ENCODE measurements at regions of chr2 and their contacts with region 1.

Region 1: GRCh38 chr2:39059366-39059952 is 61.4 kb downstream of the SOS1 start:
- DNase-seq: peak in 3 of 14 experiments; percentile 74 to 76 (median 74)
- ATAC-seq: peak; percentile 39
- H3K4me3 ChIP-seq: no peak overlapping the region
- H3K4me3 Mint-ChIP-seq: no peak overlapping the region
- H3K27ac ChIP-seq: no peak overlapping the region
- H3K27ac Mint-ChIP-seq: no peak overlapping the region
- H3K4me1 ChIP-seq: no peaks in the 10 kb centered on the region
- H3K4me1 Mint-ChIP-seq: no peaks in the 10 kb centered on the region
- H3K27me3 ChIP-seq: no peaks in the 10 kb centered on the region
- H3K27me3 Mint-ChIP-seq: no peaks in the 10 kb centered on the region
- CTCF ChIP-seq: peak; percentile 86

Region 2: DNA sequence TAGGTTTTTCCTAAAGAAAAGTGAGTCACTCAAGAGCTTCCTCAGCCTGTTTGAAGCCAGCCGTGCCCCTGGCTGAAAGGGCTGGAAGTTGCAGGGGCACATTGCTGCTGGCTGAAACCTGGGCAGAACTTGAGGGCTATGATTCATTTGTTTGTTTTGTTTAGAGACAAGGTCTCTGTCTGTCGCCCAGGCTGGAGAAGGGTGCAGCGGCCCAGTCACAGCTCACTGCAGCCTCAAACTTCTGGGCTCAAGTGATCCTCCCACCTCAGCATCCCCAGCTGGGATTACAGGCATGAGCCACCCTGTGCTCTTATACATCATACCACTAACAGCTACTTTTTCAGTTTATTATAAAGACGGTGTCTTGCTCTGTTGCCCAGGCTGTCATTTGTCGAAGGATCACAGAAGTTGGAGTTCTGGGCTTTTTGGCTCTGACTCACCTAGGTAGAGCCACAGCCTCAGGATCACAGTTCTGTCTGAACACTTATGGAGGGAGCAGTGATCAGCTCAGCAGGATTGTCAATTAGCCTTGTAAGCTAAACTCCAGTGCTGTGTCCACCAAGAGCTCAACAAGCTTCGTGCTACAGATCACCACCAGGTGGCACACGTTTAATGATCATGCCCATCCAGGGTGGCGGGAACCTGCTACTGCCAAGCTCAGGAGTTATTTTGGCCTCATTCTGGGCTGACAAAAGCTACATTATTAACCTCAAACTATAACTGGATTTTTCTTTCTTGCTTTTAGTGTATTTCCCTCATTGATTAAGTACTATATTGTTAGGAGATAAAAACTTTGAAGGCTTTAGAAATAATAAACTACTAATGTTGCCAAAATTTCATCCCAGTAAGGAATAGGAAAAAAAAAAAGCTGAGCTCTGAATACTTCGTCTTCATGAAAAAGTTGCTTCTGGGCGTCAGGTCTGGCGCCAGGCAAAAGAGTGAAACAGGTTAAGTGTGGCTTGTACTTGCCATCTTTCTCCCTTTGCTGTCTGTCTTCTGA is 111.9 kb before region 1 on chr2:
- CTCF ChIA-PET with region 1: no interaction called
- POLR2A ChIA-PET with region 1: no interaction called
- intact Hi-C with region 1: loop called (anchors 2 to 5 kb)
- DNase-seq: peak; percentile 27 to 78 (median 45)
- ATAC-seq: peak; percentile 61
- H3K4me3 ChIP-seq: no peak overlapping the region
- H3K4me3 Mint-ChIP-seq: no peak overlapping the region
- H3K27ac ChIP-seq: no peak overlapping the region
- H3K27ac Mint-ChIP-seq: no peak overlapping the region
- H3K4me1 ChIP-seq: no peaks in the 10 kb centered on the region
- H3K4me1 Mint-ChIP-seq: no peaks in the 10 kb centered on the region
- H3K27me3 ChIP-seq: no peaks in the 10 kb centered on the region
- H3K27me3 Mint-ChIP-seq: no peaks in the 10 kb centered on the region
- CTCF ChIP-seq: peak; percentile 69

Measured in CD4-positive, alpha-beta T cell (primary cell).